ENCODE measurements at regions of chr6 and their contacts with region 1.

Region 1: DNA sequence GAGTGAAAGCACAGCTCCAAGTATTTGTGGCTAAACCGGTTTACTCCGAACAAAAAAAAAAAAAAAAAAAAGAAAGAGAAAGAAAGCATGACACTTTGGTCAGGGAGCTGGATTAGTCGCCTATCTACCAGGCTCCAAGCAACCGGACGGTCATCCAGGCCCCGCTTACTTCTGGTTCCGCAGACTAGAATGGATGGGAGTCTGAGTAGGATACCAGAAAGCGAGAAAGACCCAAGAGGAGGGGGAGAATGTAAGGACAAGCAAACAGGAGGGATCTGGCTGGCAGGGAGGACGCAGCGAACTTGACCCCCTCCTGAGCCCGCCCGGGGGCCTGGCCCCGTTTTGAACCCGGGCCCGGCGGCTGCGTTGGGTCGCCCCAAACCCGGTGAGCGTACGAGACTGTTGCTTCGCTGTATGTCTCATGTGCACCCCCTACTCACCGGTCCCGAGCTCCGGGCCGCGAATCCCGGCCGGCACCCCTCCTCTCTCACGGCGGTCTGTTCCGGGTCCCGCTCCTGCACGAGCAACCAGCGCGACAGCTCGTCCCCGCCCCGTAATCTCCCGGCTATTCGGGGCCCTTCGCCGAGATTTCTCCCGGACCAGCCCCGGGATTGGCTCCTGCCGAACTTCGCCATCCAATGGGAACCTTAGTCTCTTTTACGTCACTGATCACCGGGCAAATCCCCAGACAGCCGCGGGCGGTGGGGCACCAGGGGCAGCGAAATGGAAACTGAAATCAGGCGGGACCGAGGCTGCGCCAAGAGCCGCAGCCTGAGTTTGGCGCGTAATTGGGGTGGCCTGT is at the start of gene TRIM26:
- DNase-seq: peak; percentile 99
- H3K4me3 Mint-ChIP-seq: peak within 1 kb of the TSS; percentile 97
- H3K27ac Mint-ChIP-seq: peak within 1 kb of the TSS; percentile 99
- H3K4me1 Mint-ChIP-seq: peaks cover 51% of the 10 kb centered on the region
- H3K27me3 Mint-ChIP-seq: no peaks in the 10 kb centered on the region
- total RNA-seq, gene TRIM26: 64.3 to 65.1 TPM

Region 2: DNA sequence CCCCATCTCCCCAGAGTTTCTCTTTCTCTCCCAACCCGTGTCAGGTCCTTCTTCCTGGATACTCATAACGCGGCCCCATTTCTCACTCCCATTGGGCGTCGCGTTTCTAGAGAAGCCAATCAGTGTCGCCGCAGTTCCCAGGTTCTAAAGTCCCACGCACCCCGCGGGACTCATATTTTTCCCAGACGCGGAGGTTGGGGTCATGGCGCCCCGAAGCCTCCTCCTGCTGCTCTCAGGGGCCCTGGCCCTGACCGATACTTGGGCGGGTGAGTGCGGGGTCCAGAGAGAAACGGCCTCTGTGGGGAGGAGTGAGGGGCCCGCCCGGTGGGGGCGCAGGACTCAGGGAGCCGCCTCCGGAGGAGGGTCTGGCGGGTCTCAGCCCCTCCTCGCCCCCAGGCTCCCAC is 489.8 kb before region 1 on chr6 and contains the start of gene HLA-F:
- CTCF ChIA-PET with region 1: no interaction called
- POLR2A ChIA-PET with region 1: no interaction called
- intact Hi-C with region 1: loop called (anchors 5 kb)
- DNase-seq: peak; percentile 90
- H3K4me3 Mint-ChIP-seq: peak within 1 kb of the TSS; percentile 86
- H3K27ac Mint-ChIP-seq: peak within 1 kb of the TSS; percentile 92
- H3K4me1 Mint-ChIP-seq: peaks cover 58% of the 10 kb centered on the region
- H3K27me3 Mint-ChIP-seq: no peaks in the 10 kb centered on the region
- total RNA-seq, gene HLA-F: 256 to 270 TPM

Region 3: DNA sequence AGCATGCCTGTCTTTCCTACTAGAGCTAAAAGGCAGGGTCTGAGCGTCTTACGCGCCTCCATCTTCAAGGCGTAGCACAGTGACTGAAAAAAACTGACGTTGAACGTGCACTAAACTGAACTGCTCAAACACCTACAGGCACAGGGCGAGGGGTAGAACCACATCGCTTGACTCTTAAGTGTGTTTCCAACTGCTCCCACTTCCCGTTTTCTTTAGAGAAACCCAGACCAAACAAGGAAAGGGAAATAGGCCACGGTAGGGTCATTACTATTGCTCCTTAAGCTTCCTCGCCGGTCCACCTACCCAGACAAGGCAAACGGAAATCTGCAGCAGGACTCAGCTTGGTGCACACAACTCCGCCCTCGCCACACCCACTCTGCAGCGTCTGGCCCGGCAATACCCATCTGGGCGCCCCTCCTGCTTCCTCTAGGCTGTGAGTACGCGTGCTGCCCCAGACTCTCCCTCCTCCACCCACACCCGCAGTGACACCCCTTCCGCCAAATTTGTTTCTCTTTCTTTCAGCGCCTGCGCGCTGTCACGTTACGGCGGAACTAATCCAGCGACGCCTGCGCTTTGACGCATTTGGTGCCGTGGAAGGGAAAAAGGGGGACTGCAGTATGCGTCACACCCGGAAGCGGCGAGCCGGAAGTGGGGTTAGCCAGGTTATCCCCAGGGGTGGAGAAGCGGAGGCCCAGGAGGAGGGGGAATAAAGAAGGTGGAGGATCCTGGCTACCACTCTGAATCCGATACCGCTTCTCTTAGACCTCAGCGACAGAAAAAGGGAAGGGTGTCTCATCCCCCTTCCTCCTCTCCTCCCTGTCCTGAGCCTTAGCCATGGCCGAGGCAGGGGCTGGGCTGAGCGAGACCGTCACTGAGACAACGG is 146.2 kb before region 1 on chr6 and contains the start of gene PPP1R11:
- CTCF ChIA-PET with region 1: no interaction called
- POLR2A ChIA-PET with region 1: interaction called, 9 read pairs
- intact Hi-C with region 1: loop called (anchors 1 kb)
- DNase-seq: peak; percentile 100
- H3K4me3 Mint-ChIP-seq: peak within 1 kb of the TSS; percentile 88
- H3K27ac Mint-ChIP-seq: peak within 1 kb of the TSS; percentile 95
- H3K4me1 Mint-ChIP-seq: peaks cover 50% of the 10 kb centered on the region
- H3K27me3 Mint-ChIP-seq: peaks cover 8% of the 10 kb centered on the region
- total RNA-seq, gene PPP1R11: 51.3 to 55.0 TPM

Region 4: DNA sequence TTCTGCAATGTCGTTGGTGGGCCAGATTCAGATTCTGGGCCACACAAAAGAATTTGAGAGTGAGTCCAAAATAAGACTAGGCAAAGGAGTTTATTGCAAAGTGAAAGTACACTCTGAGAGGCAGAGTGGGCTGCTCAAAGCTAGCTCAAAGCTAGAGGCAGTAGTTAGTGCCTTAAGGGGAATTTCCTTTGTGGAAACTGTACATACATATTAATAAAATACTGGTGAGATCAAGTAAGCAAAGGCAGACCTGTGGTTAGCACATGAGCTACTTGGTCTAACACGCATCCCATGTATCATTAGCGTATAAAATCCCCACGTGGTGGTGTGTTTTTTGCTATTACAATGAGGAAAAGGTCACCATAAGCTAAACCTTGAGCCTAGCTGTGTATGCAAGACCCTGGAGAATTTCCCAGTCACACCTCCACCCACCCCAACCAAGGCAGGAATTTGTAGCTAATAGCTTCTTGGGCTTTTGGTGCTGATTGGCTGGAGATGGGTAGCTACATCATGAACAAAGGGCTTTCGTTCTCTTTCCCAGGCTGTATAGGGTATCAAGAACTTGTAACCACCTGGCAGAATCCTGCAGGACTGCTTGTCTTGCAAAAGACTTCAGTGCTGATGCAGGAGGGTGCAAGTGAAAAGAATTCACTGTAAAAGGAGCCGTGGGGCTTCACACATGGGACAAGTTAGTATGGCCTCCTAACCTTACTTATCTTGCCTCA is 14.9 kb after region 1 on chr6:
- CTCF ChIA-PET with region 1: interaction called, 14 read pairs
- POLR2A ChIA-PET with region 1: interaction called, 24 read pairs
- intact Hi-C with region 1: no loop called
- DNase-seq: peak; percentile 37
- H3K4me3 Mint-ChIP-seq: peak overlapping the region; percentile 66
- H3K27ac Mint-ChIP-seq: peak overlapping the region; percentile 78
- H3K4me1 Mint-ChIP-seq: peaks cover 19% of the 10 kb centered on the region
- H3K27me3 Mint-ChIP-seq: no peaks in the 10 kb centered on the region

Region 5: DNA sequence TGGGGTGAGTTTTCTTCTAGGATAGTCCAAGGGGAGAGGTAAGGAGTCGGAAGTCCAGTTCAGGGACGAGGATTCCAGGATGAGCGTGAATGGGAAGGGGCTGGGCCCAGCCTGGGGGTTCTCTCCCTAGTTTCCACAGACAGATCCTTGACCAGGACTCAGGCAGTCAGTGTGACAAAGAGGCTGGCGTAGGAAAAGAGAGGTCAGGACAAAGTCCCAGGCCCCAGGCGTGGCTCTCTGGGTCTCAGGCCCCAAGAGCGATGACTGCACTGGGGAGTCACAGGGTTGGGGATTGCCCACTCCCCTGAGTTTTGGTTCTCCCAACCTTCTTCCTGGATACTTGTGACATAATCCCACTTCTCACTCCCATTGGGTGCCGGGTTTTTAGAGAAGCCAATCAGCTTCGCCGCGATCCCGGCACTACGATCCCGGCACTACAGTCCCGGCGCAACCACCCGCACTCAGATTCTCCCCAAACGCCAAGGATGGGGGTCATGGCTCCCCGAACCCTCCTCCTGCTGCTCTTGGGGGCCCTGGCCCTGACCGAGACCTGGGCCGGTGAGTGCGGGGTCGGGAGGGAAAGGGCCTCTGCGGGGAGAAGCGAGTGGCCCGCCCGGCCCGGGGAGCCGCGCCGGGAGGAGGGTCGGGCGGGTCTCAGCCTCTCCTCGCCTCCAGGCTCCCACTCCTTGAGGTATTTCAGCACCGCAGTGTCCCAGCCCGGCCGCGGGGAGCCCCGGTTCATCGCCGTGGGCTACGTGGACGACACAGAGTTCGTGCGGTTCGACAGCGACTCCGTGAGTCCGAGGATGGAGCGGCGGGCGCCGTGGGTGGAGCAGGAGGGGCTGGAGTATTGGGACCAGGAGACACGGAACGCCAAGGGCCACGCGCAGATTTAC is 46.3 kb after region 1 on chr6:
- CTCF ChIA-PET with region 1: interaction called, 3 read pairs
- POLR2A ChIA-PET with region 1: no interaction called
- intact Hi-C with region 1: loop called (anchors 5 kb)
- DNase-seq: peak; percentile 82
- H3K4me3 Mint-ChIP-seq: peak overlapping the region; percentile 83
- H3K27ac Mint-ChIP-seq: peak overlapping the region; percentile 44
- H3K4me1 Mint-ChIP-seq: peaks cover 21% of the 10 kb centered on the region
- H3K27me3 Mint-ChIP-seq: peaks cover 1% of the 10 kb centered on the region

Region 6: DNA sequence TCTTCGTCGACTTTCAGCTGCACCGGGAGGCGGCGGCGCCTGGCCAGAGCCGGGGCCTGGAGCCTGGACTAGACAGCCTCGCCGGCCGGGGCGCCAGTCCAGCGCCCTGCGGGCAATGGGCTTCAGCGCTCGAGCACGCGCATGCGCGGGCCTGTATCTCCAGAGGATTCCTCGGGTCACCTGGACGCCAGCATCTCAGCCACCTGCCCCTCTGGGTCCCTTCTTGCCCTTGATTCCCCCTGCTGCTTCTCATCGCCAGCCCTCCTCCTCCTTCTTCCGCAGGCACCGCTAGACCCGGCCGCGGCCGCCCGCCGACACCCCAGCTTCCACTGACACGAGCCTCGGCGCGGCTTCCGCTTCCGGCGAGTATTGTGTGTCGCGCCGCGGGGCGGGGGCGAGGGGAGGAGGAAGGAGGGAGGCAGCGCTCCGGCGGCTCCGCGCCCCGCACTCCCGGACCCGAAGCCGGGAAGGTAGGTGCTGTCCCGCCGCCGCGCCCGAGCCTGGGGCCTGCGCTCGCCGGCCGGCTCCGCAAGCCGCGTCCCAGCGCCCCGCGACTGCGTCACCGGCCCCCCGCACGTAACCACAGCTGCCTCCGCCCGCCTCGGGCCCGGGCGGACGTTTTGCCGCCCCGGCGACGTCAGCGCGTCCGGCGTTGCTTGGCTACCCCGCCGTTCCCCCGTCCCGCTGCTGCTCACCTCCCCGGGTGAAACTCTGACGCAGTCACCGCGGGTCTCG is 113.6 kb after region 1 on chr6 and contains the start of gene TRIM39:
- CTCF ChIA-PET with region 1: interaction called, 8 read pairs
- POLR2A ChIA-PET with region 1: interaction called, 6 read pairs
- intact Hi-C with region 1: loop called (anchors 1 kb)
- DNase-seq: peak; percentile 90
- H3K4me3 Mint-ChIP-seq: peak within 1 kb of the TSS; percentile 93
- H3K27ac Mint-ChIP-seq: peak within 1 kb of the TSS; percentile 94
- H3K4me1 Mint-ChIP-seq: peaks cover 51% of the 10 kb centered on the region
- H3K27me3 Mint-ChIP-seq: no peaks in the 10 kb centered on the region
- total RNA-seq, gene TRIM39: 13.7 to 15.6 TPM

Region 7: DNA sequence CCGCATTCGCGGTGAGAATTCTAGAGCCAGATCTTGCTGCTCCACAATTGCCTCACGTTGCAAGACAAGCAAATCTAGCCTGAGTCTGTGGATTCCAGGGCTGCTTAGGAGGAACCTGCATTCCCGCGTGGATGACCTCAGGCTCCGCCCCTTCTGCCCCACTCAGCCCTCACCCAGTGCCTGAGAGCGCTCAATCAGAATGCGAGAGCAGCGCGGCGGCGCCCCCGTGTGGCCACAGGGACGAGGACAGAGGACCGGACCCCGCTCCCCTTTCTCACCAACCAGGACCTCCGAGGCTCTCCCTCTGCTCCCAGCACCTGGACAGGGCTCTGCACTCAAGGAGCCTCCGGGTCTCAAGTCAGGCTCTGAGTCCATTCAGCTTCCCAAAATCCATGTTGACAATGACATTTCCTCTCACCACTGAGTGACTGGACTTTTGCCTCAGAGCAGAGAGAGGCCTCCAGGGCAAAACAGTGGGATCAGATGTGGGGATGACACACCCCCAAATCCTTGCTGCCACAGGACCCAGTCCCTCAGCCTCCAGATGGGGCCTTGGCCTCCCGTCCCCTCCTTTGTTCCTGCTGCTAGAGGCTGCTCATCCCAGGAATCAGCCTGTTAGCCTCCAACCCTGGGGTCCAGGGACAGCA is 183.9 kb after region 1 on chr6:
- CTCF ChIA-PET with region 1: interaction called, 40 read pairs
- POLR2A ChIA-PET with region 1: no interaction called
- intact Hi-C with region 1: loop called (anchors 2 kb)
- DNase-seq: peak; percentile 90
- H3K4me3 Mint-ChIP-seq: no peak overlapping the region
- H3K27ac Mint-ChIP-seq: no peak overlapping the region
- H3K4me1 Mint-ChIP-seq: no peaks in the 10 kb centered on the region
- H3K27me3 Mint-ChIP-seq: peaks cover 24% of the 10 kb centered on the region